ENCODE measurements at regions of chr21 and their contacts with region 1.

Region 1: GRCh38 chr21:33360881-33361602 is 36.3 kb downstream of the IFNAR1 start:
- DNase-seq: peak; percentile 90
- ATAC-seq: peak; percentile 77
- H3K4me3 Mint-ChIP-seq: peak overlapping the region; percentile 86
- H3K27ac Mint-ChIP-seq: peak overlapping the region; percentile 55
- H3K4me1 Mint-ChIP-seq: peaks cover 22% of the 10 kb centered on the region
- H3K27me3 Mint-ChIP-seq: no peaks in the 10 kb centered on the region

Region 2: GRCh38 chr21:33205476-33205875 is 155.6 kb before region 1 on chr21:
- POLR2A ChIA-PET with region 1: interaction called, 11 read pairs
- DNase-seq: peak; percentile 50
- ATAC-seq: peak; percentile 67
- H3K4me3 Mint-ChIP-seq: peak overlapping the region; percentile 84
- H3K27ac Mint-ChIP-seq: peak overlapping the region; percentile 94
- H3K4me1 Mint-ChIP-seq: peaks cover 40% of the 10 kb centered on the region
- H3K27me3 Mint-ChIP-seq: no peaks in the 10 kb centered on the region

Region 3: GRCh38 chr21:33286600-33287456 is 74.2 kb before region 1 on chr21:
- POLR2A ChIA-PET with region 1: no interaction called
- DNase-seq: no peak
- ATAC-seq: no peak
- H3K4me3 Mint-ChIP-seq: no peak overlapping the region
- H3K27ac Mint-ChIP-seq: no peak overlapping the region
- H3K4me1 Mint-ChIP-seq: no peaks in the 10 kb centered on the region
- H3K27me3 Mint-ChIP-seq: no peaks in the 10 kb centered on the region

Region 4: DNA sequence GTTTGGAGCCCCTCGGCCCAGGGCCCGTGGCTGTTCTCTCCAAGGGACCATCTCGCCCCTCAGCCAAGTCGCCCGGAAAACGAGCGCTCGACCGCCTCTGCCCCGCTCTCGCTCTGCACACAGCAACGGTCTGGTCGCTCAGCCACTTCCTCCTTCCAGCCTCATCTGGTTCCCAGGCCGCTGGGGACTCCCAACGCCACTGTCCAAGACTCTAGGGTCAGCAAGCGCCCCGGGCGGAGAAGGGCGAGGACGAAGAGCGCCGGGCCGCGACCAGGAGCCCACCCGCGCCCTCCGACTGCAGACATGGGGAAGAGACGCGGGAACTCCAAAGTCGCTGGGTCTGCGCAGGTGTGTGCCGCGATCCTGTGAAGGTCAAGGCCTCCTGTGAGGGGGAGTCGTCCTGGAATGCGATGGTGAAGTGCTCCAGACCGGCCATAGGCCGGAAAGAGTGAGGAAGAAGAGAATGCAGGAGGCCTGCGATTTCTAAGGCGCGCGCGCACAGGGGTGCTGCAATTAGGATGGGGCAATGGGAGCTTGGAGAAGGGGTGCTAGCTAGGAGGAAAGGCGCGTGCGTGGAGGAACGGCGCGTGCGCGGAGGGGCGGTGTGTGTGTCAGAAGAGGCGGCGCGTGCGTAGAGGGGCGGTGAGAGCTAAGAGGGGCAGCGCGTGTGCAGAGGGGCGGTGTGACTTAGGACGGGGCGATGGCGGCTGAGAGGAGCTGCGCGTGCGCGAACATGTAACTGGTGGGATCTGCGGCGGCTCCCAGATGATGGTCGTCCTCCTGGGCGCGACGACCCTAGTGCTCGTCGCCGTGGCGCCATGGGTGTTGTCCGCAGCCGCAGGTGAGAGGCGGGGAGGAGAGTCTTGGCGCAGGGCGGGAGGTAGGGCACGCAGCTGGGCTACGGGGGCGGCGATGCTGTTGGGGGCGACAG is 36.5 kb before region 1 on chr21 and contains the start of gene IFNAR1:
- POLR2A ChIA-PET with region 1: interaction called, 50 read pairs
- DNase-seq: peak; percentile 98
- ATAC-seq: peak; percentile 97
- H3K4me3 Mint-ChIP-seq: no peak within 1 kb of the TSS
- H3K27ac Mint-ChIP-seq: no peak within 1 kb of the TSS
- H3K4me1 Mint-ChIP-seq: peaks cover 19% of the 10 kb centered on the region
- H3K27me3 Mint-ChIP-seq: peaks cover 7% of the 10 kb centered on the region
- total RNA-seq, gene IFNAR1: 35.7 to 36.3 TPM

Region 5: GRCh38 chr21:33380483-33380998 is 19.5 kb after region 1 on chr21:
- POLR2A ChIA-PET with region 1: interaction called, 20 read pairs
- DNase-seq: peak; percentile 72
- ATAC-seq: peak; percentile 79
- H3K4me3 Mint-ChIP-seq: peak overlapping the region; percentile 57
- H3K27ac Mint-ChIP-seq: peak overlapping the region; percentile 82
- H3K4me1 Mint-ChIP-seq: peaks cover 55% of the 10 kb centered on the region
- H3K27me3 Mint-ChIP-seq: peaks cover 15% of the 10 kb centered on the region

Region 6: GRCh38 chr21:33419538-33420123 is 58.6 kb after region 1 on chr21:
- POLR2A ChIA-PET with region 1: no interaction called
- DNase-seq: no peak
- ATAC-seq: no peak
- H3K4me3 Mint-ChIP-seq: no peak overlapping the region
- H3K27ac Mint-ChIP-seq: no peak overlapping the region
- H3K4me1 Mint-ChIP-seq: peaks cover 5% of the 10 kb centered on the region
- H3K27me3 Mint-ChIP-seq: no peaks in the 10 kb centered on the region

Region 7: GRCh38 chr21:33434770-33435360 is 73.8 kb after region 1 on chr21:
- POLR2A ChIA-PET with region 1: interaction called, 10 read pairs
- DNase-seq: no peak
- ATAC-seq: peak; percentile 98
- H3K4me3 Mint-ChIP-seq: peak overlapping the region; percentile 32
- H3K27ac Mint-ChIP-seq: peak overlapping the region; percentile 75
- H3K4me1 Mint-ChIP-seq: peaks cover 24% of the 10 kb centered on the region
- H3K27me3 Mint-ChIP-seq: no peaks in the 10 kb centered on the region

Measured in activated naive CD8-positive, alpha-beta T cell treated with anti-CD3 and anti-CD28 coated beads, Interleukin-2, amount 10 ng/mL, durations not matched to agents 7 days and 5 days (primary cell).